ENCODE measurements at regions of chr6 and their contacts with region 1.

Region 1: DNA sequence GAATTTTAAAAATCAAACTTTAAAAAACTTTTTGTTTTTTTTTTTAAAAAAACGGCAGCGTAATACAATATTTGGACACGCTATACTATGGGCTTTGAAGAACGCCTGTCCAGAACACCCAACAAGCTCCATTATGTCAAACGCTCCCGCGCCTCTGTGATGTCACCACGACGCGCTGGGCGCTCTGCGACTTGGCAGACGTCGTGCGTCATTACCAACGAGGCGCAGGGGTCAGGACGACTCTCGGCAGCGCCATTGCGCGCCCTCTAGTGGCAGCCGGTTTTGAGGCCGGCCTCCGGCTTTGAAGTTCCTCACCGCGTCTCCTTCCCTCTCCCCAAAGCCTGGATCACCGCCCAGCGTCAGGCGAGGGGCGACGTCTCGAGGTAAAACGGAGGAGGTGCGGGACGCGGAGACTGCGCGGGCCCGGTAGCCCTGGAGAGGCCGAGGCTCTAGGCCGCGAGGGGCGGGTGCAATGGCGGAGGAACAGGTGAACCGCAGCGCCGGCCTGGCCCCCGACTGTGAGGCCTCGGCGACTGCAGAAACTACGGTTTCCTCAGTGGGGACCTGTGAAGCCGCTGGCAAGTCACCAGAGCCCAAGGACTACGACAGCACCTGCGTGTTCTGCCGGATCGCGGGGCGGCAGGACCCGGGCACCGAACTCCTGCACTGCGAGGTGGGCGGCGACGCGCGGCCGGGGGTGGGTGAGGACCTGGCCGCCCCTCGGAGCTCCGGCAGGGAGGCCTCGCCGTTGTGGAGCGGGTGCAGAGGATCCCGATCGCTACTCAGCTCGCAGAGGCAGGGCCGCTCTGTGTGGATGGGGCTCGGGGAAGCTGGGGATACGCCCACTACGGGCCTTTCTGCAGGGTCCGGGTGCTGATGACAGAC is at the start of gene HINT3:
- DNase-seq: peak; percentile 78 to 97
- ATAC-seq: peak; percentile 85 to 89
- H3K4me3 ChIP-seq: peak within 1 kb of the TSS; percentile 86
- H3K27ac ChIP-seq: peak within 1 kb of the TSS; percentile 95 to 96
- H3K4me1 ChIP-seq: peaks cover 22% of the 10 kb centered on the region; the same call in 2 of the 3 replicates
- CTCF ChIP-seq: peak; percentile 82
- EP300 ChIP-seq: no peak
- POLR2A ChIP-seq: no peak; the same call in 1 of the 2 replicates
- RAD21 ChIP-seq: peak; percentile 67 to 85
- polyA plus RNA-seq, gene HINT3: 4.7 and 7.2 TPM in 2 replicates

Region 2: DNA sequence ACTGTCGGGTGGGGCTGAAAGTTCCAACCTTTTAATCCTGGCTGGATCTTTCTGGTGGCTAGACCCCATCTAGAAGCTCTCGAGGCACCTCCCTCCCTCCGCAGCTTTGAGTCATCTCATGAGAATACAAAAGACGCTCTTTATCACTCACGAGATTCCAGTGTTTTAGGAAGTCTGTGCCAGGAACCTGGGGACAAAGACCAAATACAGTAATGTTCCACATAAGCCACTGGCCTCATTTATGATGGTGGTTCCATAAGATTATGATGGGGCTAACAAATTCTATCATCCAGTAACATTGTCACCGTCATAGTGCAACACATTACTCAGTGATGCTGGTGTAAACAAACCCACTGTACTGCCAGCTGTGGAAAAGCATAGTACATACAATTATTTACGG is 117.3 kb before region 1 on chr6:
- CTCF ChIA-PET with region 1: interaction called, 11 read pairs
- POLR2A ChIA-PET with region 1: interaction called, 3 read pairs
- DNase-seq: no peak
- ATAC-seq: peak in 1 of 2 experiments; percentile 53; a peak in 1 of 6 replicates
- H3K4me3 ChIP-seq: no peak overlapping the region
- H3K27ac ChIP-seq: no peak overlapping the region
- H3K4me1 ChIP-seq: peaks cover 27% of the 10 kb centered on the region
- CTCF ChIP-seq: no peak
- EP300 ChIP-seq: no peak
- POLR2A ChIP-seq: no peak
- RAD21 ChIP-seq: no peak

Region 3: DNA sequence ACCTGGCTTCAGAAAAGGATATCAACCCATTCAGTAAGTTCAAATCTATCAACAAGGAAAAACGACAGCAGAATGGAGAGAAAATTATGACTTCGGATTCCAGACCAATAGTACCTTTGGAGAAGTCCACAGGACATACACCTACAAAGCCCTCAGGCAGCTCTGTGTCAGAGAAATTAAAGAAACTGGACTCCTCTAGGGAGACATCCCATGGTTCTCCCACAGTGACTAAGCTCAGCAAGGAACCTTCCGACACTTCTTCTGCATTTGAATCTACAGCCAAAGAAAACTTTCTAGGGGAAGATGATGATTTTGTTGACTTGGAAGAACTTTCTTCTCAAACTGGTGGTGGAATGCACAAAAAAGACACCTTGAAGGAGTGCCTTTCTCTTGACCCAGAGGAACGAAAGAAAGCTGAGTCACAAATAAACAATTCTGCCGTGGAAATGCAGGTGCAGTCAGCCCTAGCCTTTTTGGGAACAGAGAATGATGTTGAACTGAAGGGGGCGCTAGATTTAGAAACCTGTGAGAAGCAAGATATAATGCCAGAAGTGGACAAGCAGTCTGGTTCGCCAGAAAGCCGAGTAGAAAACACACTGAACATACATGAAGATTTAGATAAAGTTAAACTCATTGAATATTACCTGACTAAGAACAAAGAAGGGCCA is 67.6 kb before region 1 on chr6:
- CTCF ChIA-PET with region 1: interaction called, 14 read pairs
- POLR2A ChIA-PET with region 1: no interaction called
- DNase-seq: peak in 1 of 2 experiments; percentile 61
- ATAC-seq: peak in 1 of 2 experiments; percentile 75; a peak in 3 of 6 replicates
- H3K4me3 ChIP-seq: no peak overlapping the region
- H3K27ac ChIP-seq: peak overlapping the region in 1 of 2 experiments; percentile 40; a peak in 2 of 6 replicates
- H3K4me1 ChIP-seq: peaks cover 18% of the 10 kb centered on the region
- CTCF ChIP-seq: peak; percentile 47
- EP300 ChIP-seq: no peak
- POLR2A ChIP-seq: no peak
- RAD21 ChIP-seq: peak; percentile 14 to 20; a peak in 1 of 5 replicates

Region 4: DNA sequence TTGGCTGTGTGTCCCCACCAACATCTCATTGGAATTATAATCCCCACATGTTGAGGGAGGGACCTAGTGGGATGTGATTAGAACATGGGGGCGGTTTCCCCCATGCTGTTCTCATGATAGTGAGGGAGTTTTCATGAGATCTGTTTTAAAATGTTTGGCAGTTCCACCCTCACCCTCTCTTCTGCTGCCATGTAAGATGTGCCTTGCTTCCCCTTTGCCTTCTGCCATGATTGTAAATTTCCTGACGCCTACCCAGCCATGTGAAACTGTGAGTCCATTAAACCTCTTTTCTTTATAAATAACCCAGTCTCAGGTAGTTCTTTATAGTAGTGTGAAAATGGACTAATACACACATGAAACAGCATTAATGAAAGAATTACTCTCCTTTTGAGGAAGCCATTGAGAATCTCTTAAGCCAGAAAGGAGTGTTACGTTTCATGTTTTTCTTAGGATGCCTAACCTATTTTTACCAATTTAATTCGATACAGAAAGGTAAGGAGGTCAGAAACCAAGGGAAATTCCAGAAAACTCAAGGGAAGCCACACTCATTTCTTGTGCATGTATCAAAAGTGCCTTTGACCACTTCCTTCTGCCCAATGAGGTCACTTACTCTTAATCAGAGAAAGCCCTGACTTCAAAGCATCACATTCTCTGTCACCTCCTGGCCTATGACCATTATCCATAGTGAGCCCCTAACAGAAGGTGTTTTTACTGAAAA is 24.9 kb before region 1 on chr6:
- CTCF ChIA-PET with region 1: interaction called, 10 read pairs
- POLR2A ChIA-PET with region 1: no interaction called
- DNase-seq: no peak
- ATAC-seq: peak in 1 of 2 experiments; percentile 18; a peak in 3 of 6 replicates
- H3K4me3 ChIP-seq: no peak overlapping the region
- H3K27ac ChIP-seq: peak overlapping the region; percentile 10 to 62; a peak in 3 of 6 replicates
- H3K4me1 ChIP-seq: peaks cover 32% of the 10 kb centered on the region
- CTCF ChIP-seq: no peak
- EP300 ChIP-seq: no peak
- POLR2A ChIP-seq: no peak
- RAD21 ChIP-seq: no peak

Region 5: GRCh38 chr6:125974214-125974866 is 17.6 kb after region 1 on chr6:
- CTCF ChIA-PET with region 1: interaction called, 27 read pairs
- POLR2A ChIA-PET with region 1: no interaction called
- DNase-seq: peak; percentile 19 to 52
- ATAC-seq: peak; percentile 77 to 81
- H3K4me3 ChIP-seq: no peak overlapping the region
- H3K27ac ChIP-seq: peak overlapping the region; percentile 41 to 73; a peak in 3 of 6 replicates
- H3K4me1 ChIP-seq: peaks cover 6% of the 10 kb centered on the region; the same call in 1 of the 3 replicates
- CTCF ChIP-seq: peak; percentile 72
- EP300 ChIP-seq: no peak
- POLR2A ChIP-seq: no peak
- RAD21 ChIP-seq: peak; percentile 72 to 73

Region 6: DNA sequence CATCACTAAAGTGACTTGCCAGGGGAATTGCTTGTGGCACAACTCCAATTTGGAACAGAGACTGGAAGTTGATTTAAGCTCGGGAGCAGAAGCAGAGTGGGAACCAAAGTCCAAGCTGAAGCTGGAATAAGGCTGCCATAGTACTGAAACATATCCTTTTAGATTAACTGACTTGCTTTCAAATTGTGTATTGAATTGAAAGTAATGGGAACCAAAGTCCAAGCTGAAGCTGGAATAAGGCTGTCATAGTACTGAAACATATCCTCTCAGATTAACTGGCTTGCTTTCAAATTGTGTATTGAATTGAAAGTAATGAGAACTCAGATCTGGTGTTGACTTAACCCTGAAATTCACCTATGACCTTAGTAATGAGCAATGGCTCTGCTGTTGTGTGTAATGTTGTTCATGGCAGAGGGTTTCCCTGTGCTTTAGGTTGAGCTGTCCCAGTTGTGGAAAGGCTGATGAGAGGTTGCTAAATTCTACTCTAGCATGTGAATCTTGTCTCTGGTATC is 423.4 kb after region 1 on chr6:
- CTCF ChIA-PET with region 1: no interaction called
- POLR2A ChIA-PET with region 1: no interaction called
- DNase-seq: no peak
- ATAC-seq: no peak
- H3K4me3 ChIP-seq: no peak overlapping the region
- H3K27ac ChIP-seq: no peak overlapping the region
- H3K4me1 ChIP-seq: no peaks in the 10 kb centered on the region
- CTCF ChIP-seq: no peak
- EP300 ChIP-seq: no peak
- POLR2A ChIP-seq: no peak
- RAD21 ChIP-seq: no peak

Measured in A549 (cell line).